Activated CD4-positive, alpha-beta T cell treated with anti-CD3 and anti-CD28 coated beads for 36 hours (primary cell): ENCODE measurements at regions of chr3 and their contacts with region 1.

Region 1: DNA sequence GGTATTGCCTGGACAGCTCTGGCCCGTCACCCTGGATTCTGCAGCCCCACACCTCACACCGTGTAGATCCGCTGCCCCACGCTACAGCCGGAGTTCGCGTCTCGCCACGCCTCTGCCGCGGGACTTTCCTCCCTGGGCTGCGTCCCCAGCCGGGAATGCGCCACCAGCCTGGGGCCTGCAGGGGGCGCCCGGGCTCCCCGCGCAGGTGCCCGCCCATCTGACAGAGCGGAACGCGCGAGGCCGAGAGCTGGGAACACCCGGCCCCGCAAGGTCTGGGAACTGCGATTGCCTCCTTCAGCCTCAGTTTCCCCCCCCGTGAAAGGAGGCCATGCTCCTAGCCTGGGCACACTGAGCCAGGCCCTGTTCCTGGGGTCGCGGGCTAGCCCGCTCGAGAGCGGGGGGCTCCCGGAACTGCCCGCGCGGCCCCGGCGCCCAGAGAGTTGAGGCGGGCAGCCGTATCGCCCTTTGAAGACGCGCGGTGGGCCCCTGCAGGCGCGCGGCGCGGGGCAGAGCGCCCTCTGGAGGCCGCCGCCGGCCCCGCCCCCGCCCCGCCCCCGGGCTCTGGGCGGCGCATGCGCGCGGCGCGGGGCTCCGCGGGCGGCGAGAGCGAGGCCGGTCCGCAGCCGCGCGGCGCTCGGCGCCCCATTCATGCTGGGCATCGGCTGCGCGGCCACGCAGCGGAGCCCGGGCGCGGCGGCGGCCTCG is at the start of gene PLXNA1:
- DNase-seq: peak; percentile 90
- ATAC-seq: peak; percentile 84
- H3K4me3 Mint-ChIP-seq: peak within 1 kb of the TSS; percentile 74
- H3K27ac Mint-ChIP-seq: peak within 1 kb of the TSS; percentile 88
- H3K4me1 Mint-ChIP-seq: peaks cover 20% of the 10 kb centered on the region
- H3K27me3 Mint-ChIP-seq: peaks cover 8% of the 10 kb centered on the region
- total RNA-seq, gene PLXNA1: 6.7 to 8.8 TPM

Region 2: GRCh38 chr3:125916376-125916978 is 1066.1 kb before region 1 on chr3:
- CTCF ChIA-PET with region 1: no interaction called
- POLR2A ChIA-PET with region 1: no interaction called
- intact Hi-C with region 1: loop called in 1 of 2 experiments (anchors 10 kb)
- DNase-seq: peak; percentile 99
- ATAC-seq: peak; percentile 94
- H3K4me3 Mint-ChIP-seq: peak overlapping the region; percentile 82
- H3K27ac Mint-ChIP-seq: peak overlapping the region; percentile 72
- H3K4me1 Mint-ChIP-seq: peaks cover 28% of the 10 kb centered on the region
- H3K27me3 Mint-ChIP-seq: no peaks in the 10 kb centered on the region

Region 3: GRCh38 chr3:126475413-126476114 is 507.1 kb before region 1 on chr3 and contains the start of gene ZXDC:
- CTCF ChIA-PET with region 1: no interaction called
- POLR2A ChIA-PET with region 1: no interaction called
- intact Hi-C with region 1: loop called in 1 of 2 experiments (anchors 1 kb)
- DNase-seq: peak; percentile 96
- ATAC-seq: peak; percentile 88
- H3K4me3 Mint-ChIP-seq: peak within 1 kb of the TSS; percentile 95
- H3K27ac Mint-ChIP-seq: peak within 1 kb of the TSS; percentile 91
- H3K4me1 Mint-ChIP-seq: peaks cover 40% of the 10 kb centered on the region
- H3K27me3 Mint-ChIP-seq: no peaks in the 10 kb centered on the region
- total RNA-seq, gene ZXDC: 21.6 to 23.1 TPM

Region 4: DNA sequence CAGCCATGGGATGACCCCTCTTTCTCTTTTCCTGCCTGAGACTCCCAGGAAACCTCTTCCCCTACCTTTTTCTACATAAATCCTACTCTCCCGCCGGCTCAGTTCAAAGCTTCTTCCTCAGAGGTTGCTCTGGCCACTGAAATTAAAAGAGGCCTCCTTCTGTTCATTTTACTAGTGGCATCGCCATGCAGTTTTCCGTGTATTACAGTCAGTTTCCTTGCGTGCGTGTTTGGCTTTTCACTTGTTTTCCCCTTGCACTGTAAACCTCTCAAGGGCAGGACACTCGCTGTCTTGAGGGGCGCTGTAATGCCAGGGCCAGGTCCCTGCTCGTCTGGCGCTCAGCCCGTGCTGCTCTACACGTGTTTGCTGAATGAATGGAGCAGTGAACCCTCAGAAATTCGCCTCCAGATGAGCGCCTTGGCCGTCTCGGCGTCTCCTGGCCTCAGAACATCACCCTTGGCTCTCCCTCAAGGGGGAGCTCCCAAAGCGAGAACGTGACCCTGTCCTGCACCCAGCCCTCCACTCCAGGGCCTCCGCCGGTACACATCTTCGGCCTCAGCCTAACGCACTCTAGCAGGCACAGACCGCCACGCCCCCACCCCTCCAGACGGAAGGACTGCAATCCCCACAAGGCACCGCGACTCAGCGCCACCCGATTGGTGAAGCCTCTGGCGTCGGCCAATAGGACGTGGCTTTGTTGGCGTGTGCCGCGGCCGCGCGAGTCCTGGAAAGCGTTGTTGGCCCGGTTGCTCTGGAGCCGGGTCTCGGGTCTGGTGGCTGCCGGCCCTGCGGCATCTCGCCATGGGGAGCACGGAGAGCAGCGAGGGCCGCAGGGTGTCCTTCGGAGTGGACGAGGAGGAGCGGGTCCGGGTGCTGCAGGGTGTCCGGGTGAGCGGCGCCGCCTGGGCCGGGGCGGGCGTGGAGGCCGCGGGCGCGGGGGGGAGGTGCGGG is 278.8 kb before region 1 on chr3 and contains the start of gene CHCHD6:
- CTCF ChIA-PET with region 1: no interaction called
- POLR2A ChIA-PET with region 1: no interaction called
- intact Hi-C with region 1: loop called (anchors 1 to 10 kb)
- DNase-seq: peak; percentile 98
- ATAC-seq: peak; percentile 99
- H3K4me3 Mint-ChIP-seq: peak within 1 kb of the TSS; percentile 92
- H3K27ac Mint-ChIP-seq: peak within 1 kb of the TSS; percentile 82
- H3K4me1 Mint-ChIP-seq: peaks cover 23% of the 10 kb centered on the region
- H3K27me3 Mint-ChIP-seq: peaks cover 9% of the 10 kb centered on the region
- total RNA-seq, gene CHCHD6: 17.1 to 17.7 TPM

Region 5: DNA sequence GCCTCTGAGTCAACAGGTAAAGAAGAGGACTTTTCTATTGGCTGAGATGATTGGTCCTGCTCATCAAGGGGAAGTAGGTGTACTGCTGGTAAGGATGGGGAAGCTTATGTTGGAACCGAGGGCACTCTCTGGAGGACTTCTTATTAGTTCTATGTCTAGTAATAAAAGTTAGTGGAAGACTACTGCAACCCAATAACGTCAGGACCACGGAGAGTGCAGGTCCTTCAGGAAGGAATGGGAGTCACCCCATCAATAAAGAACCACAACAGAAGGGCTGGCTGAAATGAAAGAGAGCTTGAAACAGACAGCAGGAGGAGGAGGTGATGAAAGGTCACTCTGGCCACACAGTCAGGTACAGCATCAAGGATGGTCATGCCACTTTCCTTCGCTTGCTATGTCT is 141.5 kb after region 1 on chr3:
- CTCF ChIA-PET with region 1: no interaction called
- POLR2A ChIA-PET with region 1: no interaction called
- intact Hi-C with region 1: no loop called
- DNase-seq: no peak
- ATAC-seq: no peak
- H3K4me3 Mint-ChIP-seq: no peak overlapping the region
- H3K27ac Mint-ChIP-seq: no peak overlapping the region
- H3K4me1 Mint-ChIP-seq: no peaks in the 10 kb centered on the region
- H3K27me3 Mint-ChIP-seq: peaks cover 12% of the 10 kb centered on the region

Region 6: GRCh38 chr3:127455541-127456450 is 473.2 kb after region 1 on chr3:
- CTCF ChIA-PET with region 1: no interaction called
- POLR2A ChIA-PET with region 1: no interaction called
- intact Hi-C with region 1: loop called (anchors 1 to 10 kb)
- DNase-seq: peak; percentile 86
- ATAC-seq: peak; percentile 95
- H3K4me3 Mint-ChIP-seq: no peak overlapping the region
- H3K27ac Mint-ChIP-seq: no peak overlapping the region
- H3K4me1 Mint-ChIP-seq: peaks cover 13% of the 10 kb centered on the region
- H3K27me3 Mint-ChIP-seq: peaks cover 60% of the 10 kb centered on the region

Region 7: DNA sequence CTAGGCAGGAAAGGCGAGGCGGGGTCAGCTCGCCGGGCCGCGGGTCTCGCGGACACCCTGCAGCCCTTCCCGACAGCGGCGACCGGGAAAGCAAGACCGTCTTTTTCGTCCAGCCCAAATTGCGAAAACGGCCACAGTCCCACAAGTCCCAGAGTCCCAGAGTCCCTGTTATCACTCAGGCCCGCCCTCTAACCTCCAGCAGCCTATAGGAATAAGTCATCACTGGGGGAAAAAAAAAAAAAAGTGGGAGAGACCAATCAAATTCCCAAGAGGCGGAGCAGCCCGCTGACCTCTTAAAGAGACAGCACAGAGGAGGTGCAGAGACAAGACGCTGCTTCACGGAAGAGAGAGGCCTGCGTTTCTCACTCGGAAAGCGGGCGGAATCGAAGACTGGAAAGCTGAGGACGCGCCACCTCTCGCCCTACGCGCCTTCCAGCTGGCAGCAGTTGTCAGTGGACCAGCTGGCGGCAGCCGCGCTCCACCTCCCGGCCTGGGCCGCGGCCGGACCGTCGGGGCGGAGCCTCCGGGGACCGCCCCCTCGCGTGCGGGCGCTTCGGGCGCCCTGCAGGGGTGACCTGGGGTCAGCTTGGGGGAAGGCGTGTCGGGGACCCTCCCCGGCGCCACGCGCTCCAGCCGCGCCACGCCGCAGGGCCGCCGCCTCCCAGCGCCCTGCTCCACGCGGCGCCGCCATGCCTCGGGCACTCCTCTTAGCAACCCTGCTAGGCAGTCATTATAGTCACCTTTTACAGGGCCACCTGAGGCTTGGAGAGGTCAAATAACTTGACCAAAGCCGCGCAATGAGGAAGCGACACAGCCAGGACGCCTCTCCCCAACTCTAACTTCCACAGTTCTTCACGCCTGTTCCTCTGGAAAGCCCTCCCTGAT is 608.2 kb after region 1 on chr3 and contains the start of gene TPRA1:
- CTCF ChIA-PET with region 1: no interaction called
- POLR2A ChIA-PET with region 1: no interaction called
- intact Hi-C with region 1: loop called in 1 of 2 experiments (anchors 1 kb)
- DNase-seq: peak; percentile 88
- ATAC-seq: peak; percentile 86
- H3K4me3 Mint-ChIP-seq: peak within 1 kb of the TSS; percentile 84
- H3K27ac Mint-ChIP-seq: peak within 1 kb of the TSS; percentile 96
- H3K4me1 Mint-ChIP-seq: peaks cover 25% of the 10 kb centered on the region
- H3K27me3 Mint-ChIP-seq: no peaks in the 10 kb centered on the region
- total RNA-seq, gene TPRA1: 22.5 to 24.8 TPM